ENCODE measurements at regions of chr11 and their contacts with region 1.

Region 1: GRCh38 chr11:128757235-128757711 is 63.4 kb downstream of the FLI1 start:
- DNase-seq: peak; percentile 64 to 89
- ATAC-seq: peak; percentile 90 to 93 (median 92)
- H3K4me3 ChIP-seq: no peak overlapping the region
- H3K4me3 Mint-ChIP-seq: peak overlapping the region; percentile 72
- H3K27ac ChIP-seq: peak overlapping the region; percentile 24
- H3K27ac Mint-ChIP-seq: peak overlapping the region; percentile 88 to 93
- H3K4me1 ChIP-seq: peaks cover 60% of the 10 kb centered on the region
- H3K4me1 Mint-ChIP-seq: peaks cover 81 to 88% of the 10 kb centered on the region in 2 donors
- H3K27me3 ChIP-seq: no peaks in the 10 kb centered on the region
- H3K27me3 Mint-ChIP-seq: no peaks in the 10 kb centered on the region
- CTCF ChIP-seq: peak; percentile 73

Region 2: GRCh38 chr11:128157423-128158298 is 599.6 kb before region 1 on chr11:
- intact Hi-C with region 1: loop called (anchors 1 kb)
- DNase-seq: peak; percentile 38 to 86
- ATAC-seq: peak; percentile 86 to 94 (median 92)
- H3K4me3 ChIP-seq: peak overlapping the region; percentile 14
- H3K4me3 Mint-ChIP-seq: peak overlapping the region; percentile 70
- H3K27ac ChIP-seq: no peak overlapping the region
- H3K27ac Mint-ChIP-seq: peak overlapping the region in 1 of 2 donors; percentile 78
- H3K4me1 ChIP-seq: no peaks in the 10 kb centered on the region
- H3K4me1 Mint-ChIP-seq: peaks cover 9 to 12% of the 10 kb centered on the region in 2 donors
- H3K27me3 ChIP-seq: no peaks in the 10 kb centered on the region
- H3K27me3 Mint-ChIP-seq: no peaks in the 10 kb centered on the region
- CTCF ChIP-seq: peak; percentile 97

Region 3: DNA sequence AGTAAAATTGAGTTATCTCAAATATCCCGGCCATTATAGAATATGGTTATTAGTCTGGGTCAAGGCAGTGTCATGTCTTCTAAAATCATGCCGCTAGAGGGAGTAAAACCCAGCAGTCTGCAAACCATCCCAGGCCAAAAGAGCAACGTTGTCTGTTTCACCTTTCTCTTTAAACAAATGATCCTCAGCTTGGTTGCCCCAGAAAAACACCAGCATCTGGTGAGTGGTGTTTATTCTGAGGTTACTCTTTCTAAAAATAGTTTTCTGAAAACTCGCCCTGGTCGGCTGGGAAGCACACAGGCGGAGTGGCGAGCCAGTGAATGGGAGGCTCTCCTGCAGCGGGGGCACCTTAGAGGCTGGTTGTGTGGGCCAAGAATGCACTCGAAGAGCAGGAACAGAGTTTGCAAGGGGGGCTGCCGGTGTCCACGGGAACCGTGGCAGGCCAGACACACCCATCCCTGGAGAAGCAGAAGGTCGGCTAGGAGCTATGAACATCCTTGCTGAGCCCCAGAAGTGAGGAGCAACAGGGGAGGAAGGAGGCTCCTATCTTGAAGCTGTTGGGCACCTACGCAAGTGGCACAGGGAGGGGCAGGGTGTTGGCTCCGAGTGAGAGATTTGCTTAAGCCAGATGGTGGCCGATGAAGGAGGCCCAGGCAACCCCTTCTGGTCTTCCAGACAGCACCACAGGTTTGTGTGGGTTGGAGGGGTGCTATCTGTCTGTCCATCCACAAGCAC is 467.0 kb before region 1 on chr11:
- intact Hi-C with region 1: loop called (anchors 1 kb)
- DNase-seq: peak; percentile 62 to 95
- ATAC-seq: peak; percentile 79 to 90 (median 85)
- H3K4me3 ChIP-seq: peak overlapping the region; percentile 31
- H3K4me3 Mint-ChIP-seq: peak overlapping the region; percentile 94
- H3K27ac ChIP-seq: peak overlapping the region; percentile 97
- H3K27ac Mint-ChIP-seq: peak overlapping the region; percentile 98 to 99
- H3K4me1 ChIP-seq: peaks cover 37% of the 10 kb centered on the region
- H3K4me1 Mint-ChIP-seq: peaks cover 84 to 90% of the 10 kb centered on the region in 2 donors
- H3K27me3 ChIP-seq: no peaks in the 10 kb centered on the region
- H3K27me3 Mint-ChIP-seq: no peaks in the 10 kb centered on the region
- CTCF ChIP-seq: peak; percentile 87

Region 4: GRCh38 chr11:128720522-128720985 is 36.7 kb before region 1 on chr11:
- intact Hi-C with region 1: loop called (anchors 2 kb)
- DNase-seq: peak; percentile 57 to 71
- ATAC-seq: peak; percentile 72 to 83 (median 82)
- H3K4me3 ChIP-seq: peak overlapping the region; percentile 14
- H3K4me3 Mint-ChIP-seq: peak overlapping the region; percentile 95
- H3K27ac ChIP-seq: peak overlapping the region; percentile 81
- H3K27ac Mint-ChIP-seq: peak overlapping the region; percentile 86 to 94
- H3K4me1 ChIP-seq: peaks cover 97% of the 10 kb centered on the region
- H3K4me1 Mint-ChIP-seq: peaks cover 98% of the 10 kb centered on the region in 2 donors
- H3K27me3 ChIP-seq: no peaks in the 10 kb centered on the region
- H3K27me3 Mint-ChIP-seq: peaks cover 0 to 2% of the 10 kb centered on the region in 2 donors
- CTCF ChIP-seq: no peak